GM12878 (cell line): ENCODE measurements at regions of chr15 and their contacts with region 1.

Region 1: DNA sequence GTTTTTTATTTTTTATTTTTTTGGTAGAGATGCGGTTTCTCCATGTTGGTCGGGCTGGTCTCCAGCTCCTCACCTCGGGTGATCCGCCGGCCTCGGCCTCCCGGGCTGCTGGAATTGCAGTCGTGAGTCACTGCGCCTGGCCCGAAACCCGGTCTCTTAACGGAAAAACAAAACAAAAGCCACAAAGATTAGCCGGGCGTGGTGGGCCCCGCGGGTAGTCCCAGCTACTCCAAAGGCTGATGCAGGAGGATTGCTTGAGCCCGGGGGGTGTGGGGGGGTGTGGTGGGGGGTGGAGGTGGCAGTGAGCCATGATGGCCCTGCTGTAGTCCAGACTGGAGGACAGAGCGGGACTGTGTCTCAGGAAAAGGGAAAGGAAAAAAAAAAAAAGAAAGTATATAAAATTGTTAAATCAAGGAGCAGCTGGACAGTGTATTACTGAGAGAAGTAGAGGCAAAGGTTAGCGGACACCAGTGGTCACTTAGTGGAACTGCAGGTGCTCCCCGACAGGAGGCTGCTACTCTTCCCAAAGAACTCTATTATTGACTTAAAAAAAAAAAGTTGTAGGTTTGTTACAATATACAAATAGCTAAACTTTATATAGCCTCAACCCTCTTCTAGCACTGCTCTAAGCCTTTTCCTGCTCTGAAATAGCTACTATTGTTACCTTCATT is 30.3 kb upstream of the TUBGCP5 start:
- DNase-seq: no peak
- ATAC-seq: no peak
- H3K4me3 ChIP-seq: no peak overlapping the region
- H3K27ac ChIP-seq: no peak overlapping the region
- H3K4me1 ChIP-seq: no peaks in the 10 kb centered on the region
- H3K27me3 ChIP-seq: no peaks in the 10 kb centered on the region
- CTCF ChIP-seq: 0 out of 6 replicates have a peak, but pooled peaks of 1 of the 3 experiments have one; percentile 13
- EP300 ChIP-seq: no peak
- POLR2A ChIP-seq: no peak
- RAD21 ChIP-seq: no peak

Region 2: DNA sequence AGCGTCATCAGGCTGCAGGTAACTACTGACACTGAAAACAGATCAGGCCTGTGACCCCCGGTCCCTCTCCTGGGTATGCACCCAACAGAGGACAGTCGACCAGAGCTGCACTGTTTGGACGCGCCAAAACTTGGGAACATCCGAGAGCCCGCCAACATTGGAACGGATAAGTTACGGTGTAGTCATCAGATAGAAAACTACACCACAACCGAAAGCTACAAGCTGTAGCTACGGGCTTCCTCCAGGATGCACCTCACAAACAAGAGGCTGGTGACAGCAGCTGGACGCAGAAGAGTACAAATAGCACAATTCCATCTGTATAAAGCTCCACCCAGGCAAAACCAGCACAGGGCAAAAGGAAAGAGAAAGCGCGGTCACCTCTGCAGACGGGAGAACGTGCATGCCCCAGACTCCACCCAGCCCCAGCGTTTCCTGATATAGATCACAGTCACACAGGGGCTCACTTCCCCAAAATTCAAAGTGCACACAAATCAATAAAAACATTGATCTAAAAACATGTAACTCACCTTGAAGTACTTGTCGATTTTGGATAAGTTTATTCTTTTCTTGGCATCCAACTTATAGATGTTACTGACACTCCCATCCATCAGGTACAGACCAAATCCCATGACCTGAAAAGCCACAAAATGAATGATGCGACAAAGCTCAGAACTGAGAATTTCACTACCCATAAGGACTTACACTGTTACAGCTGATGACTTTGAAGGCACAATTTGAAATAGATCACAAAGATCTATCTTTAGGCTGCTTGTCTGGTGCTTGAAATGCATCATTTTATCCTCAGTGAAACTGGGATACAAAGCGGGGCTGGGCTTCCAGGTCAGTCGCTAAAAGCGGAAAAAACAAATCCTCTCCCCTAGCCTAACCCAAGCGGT is 132.8 kb before region 1 on chr15:
- CTCF ChIA-PET with region 1: no interaction called
- POLR2A ChIA-PET with region 1: no interaction called
- RAD21 ChIA-PET with region 1: no interaction called
- SMC1A ChIA-PET with region 1: no interaction called
- in situ Hi-C with region 1: no loop called
- intact Hi-C with region 1: no loop called
- DNase-seq: peak; percentile 44
- ATAC-seq: peak; percentile 97
- H3K4me3 ChIP-seq: peak overlapping the region; percentile 35; the same call in 1 of the 2 replicates
- H3K27ac ChIP-seq: peak overlapping the region; percentile 47
- H3K4me1 ChIP-seq: peaks cover 17% of the 10 kb centered on the region
- H3K27me3 ChIP-seq: no peaks in the 10 kb centered on the region
- CTCF ChIP-seq: no peak
- EP300 ChIP-seq: no peak
- POLR2A ChIP-seq: no peak
- RAD21 ChIP-seq: no peak

Region 3: DNA sequence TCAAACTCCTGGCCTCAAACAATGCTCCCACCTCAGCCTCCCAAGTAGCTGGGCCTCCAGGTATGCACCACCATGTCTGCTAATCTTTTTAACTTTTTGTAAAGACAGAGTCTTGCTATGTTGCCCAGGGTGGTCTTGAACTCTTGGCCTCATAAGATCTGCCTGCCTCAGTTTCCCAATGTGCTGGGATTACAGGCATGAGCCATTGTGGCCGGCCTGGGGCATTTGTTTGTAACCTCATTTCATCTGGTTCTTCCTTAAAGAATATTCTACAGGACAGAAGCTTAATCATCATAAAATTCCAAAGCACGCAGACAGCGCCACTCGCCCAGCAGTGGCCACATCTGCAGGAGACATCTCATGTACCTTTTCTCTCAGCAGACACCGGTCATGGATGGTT is 65.9 kb before region 1 on chr15:
- CTCF ChIA-PET with region 1: no interaction called
- POLR2A ChIA-PET with region 1: no interaction called
- RAD21 ChIA-PET with region 1: no interaction called
- SMC1A ChIA-PET with region 1: no interaction called
- in situ Hi-C with region 1: loop called (anchors 5 kb)
- intact Hi-C with region 1: no loop called
- DNase-seq: no peak
- ATAC-seq: no peak
- H3K4me3 ChIP-seq: no peak overlapping the region
- H3K27ac ChIP-seq: no peak overlapping the region
- H3K4me1 ChIP-seq: no peaks in the 10 kb centered on the region
- H3K27me3 ChIP-seq: no peaks in the 10 kb centered on the region
- CTCF ChIP-seq: no peak
- EP300 ChIP-seq: no peak
- POLR2A ChIP-seq: no peak
- RAD21 ChIP-seq: no peak